ENCODE measurements at regions of chrX and their contacts with region 1.

Region 1: GRCh38 chrX:140572724-140573123 is 67.9 kb upstream of the SOX3 start:
- DNase-seq: peak; percentile 14
- H3K4me3 ChIP-seq: no peak overlapping the region
- H3K27ac ChIP-seq: no peak overlapping the region
- H3K4me1 ChIP-seq: no peaks in the 10 kb centered on the region
- H3K27me3 ChIP-seq: no peaks in the 10 kb centered on the region
- CTCF ChIP-seq: peak; percentile 52 to 72

Region 2: DNA sequence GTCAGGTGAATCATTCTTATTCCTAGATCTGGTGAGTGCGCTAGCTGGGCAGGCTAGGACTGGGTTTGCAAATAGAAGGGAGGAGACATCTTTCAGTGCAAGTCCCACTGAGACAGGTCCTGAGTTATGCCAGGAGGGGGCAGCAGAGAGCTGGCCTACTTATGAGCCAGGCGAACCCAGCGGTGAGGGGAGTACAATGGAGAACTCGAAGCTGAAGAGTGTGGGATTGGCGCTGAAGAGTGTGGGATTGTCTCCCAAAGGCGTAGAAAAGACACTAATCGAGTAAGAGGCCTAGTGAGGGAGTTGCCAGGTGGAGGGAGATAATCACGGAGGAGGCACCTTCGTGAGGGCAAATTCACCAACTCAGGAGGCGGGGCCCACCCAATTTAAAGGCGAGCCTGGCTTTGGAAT is 515.7 kb before region 1 on chrX:
- CTCF ChIA-PET with region 1: no interaction called
- dilution Hi-C with region 1: no loop called
- in situ Hi-C with region 1: no loop called
- intact Hi-C with region 1: loop called (anchors 5 kb)
- DNase-seq: peak; percentile 57
- H3K4me3 ChIP-seq: no peak overlapping the region
- H3K27ac ChIP-seq: no peak overlapping the region
- H3K4me1 ChIP-seq: no peaks in the 10 kb centered on the region
- H3K27me3 ChIP-seq: no peaks in the 10 kb centered on the region
- CTCF ChIP-seq: peak; percentile 74 to 91

Region 3: DNA sequence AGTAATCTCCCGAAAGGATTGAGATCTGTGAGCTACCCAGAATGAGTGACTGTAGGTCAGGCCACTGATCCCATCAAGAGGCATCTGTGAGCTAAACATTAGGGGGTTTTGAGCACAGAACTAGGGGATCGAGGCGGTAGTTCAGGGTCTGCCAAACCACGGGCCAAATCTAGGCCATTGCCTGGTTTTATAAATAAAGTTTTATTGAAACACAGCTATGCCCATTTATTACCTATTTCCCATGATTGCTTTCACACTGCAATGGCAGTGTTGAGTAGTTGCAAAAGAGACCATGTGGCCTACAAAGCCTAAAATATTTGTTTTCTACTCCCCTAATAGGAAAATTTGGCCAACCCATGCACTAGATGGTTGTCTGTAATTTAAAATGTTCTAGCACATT is 116.1 kb before region 1 on chrX:
- CTCF ChIA-PET with region 1: interaction called, 16 read pairs
- dilution Hi-C with region 1: no loop called
- in situ Hi-C with region 1: no loop called
- intact Hi-C with region 1: no loop called
- DNase-seq: no peak
- H3K4me3 ChIP-seq: no peak overlapping the region
- H3K27ac ChIP-seq: no peak overlapping the region
- H3K4me1 ChIP-seq: no peaks in the 10 kb centered on the region
- H3K27me3 ChIP-seq: no peaks in the 10 kb centered on the region
- CTCF ChIP-seq: no peak

Region 4: DNA sequence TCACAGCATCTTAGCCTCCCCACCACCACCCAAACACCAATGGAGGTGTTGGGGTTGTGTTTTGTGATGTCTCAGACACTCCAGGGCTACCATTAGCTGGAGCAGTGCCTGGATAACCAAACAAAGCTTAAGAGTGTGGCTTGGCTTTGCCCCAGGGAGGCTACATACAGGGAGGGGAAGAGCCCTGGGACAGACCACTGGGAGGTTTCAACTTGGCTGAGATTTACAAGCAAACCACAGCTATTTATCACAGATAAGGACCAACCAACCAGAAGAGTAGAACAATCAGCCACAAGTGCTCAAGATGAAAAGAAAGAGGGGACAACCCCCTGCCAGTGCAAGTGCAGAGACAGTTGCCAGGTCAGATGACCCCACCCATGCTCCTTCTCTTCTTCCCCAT is 92.0 kb before region 1 on chrX:
- CTCF ChIA-PET with region 1: no interaction called
- dilution Hi-C with region 1: loop called (anchors 10 kb)
- in situ Hi-C with region 1: no loop called
- intact Hi-C with region 1: no loop called
- DNase-seq: no peak
- H3K4me3 ChIP-seq: no peak overlapping the region
- H3K27ac ChIP-seq: no peak overlapping the region
- H3K4me1 ChIP-seq: no peaks in the 10 kb centered on the region
- H3K27me3 ChIP-seq: no peaks in the 10 kb centered on the region
- CTCF ChIP-seq: no peak

Region 5: GRCh38 chrX:140701480-140701879 is 128.8 kb after region 1 on chrX:
- CTCF ChIA-PET with region 1: no interaction called
- dilution Hi-C with region 1: no loop called
- in situ Hi-C with region 1: no loop called
- intact Hi-C with region 1: no loop called
- DNase-seq: no peak
- H3K4me3 ChIP-seq: no peak overlapping the region
- H3K27ac ChIP-seq: no peak overlapping the region
- H3K4me1 ChIP-seq: no peaks in the 10 kb centered on the region
- H3K27me3 ChIP-seq: no peaks in the 10 kb centered on the region
- CTCF ChIP-seq: peak in 1 of 2 donors; percentile 20

Measured in mammary epithelial cell (primary cell).